ENCODE measurements at regions of chr3 and their contacts with region 1.

Region 1: GRCh38 chr3:136852180-136852579 is 9.8 kb upstream of the NCK1 start:
- DNase-seq: no peak
- H3K4me3 ChIP-seq: no peak overlapping the region
- H3K27ac ChIP-seq: no peak overlapping the region
- H3K4me1 ChIP-seq: no peaks in the 10 kb centered on the region
- H3K27me3 ChIP-seq: no peaks in the 10 kb centered on the region
- CTCF ChIP-seq: no peak

Region 2: DNA sequence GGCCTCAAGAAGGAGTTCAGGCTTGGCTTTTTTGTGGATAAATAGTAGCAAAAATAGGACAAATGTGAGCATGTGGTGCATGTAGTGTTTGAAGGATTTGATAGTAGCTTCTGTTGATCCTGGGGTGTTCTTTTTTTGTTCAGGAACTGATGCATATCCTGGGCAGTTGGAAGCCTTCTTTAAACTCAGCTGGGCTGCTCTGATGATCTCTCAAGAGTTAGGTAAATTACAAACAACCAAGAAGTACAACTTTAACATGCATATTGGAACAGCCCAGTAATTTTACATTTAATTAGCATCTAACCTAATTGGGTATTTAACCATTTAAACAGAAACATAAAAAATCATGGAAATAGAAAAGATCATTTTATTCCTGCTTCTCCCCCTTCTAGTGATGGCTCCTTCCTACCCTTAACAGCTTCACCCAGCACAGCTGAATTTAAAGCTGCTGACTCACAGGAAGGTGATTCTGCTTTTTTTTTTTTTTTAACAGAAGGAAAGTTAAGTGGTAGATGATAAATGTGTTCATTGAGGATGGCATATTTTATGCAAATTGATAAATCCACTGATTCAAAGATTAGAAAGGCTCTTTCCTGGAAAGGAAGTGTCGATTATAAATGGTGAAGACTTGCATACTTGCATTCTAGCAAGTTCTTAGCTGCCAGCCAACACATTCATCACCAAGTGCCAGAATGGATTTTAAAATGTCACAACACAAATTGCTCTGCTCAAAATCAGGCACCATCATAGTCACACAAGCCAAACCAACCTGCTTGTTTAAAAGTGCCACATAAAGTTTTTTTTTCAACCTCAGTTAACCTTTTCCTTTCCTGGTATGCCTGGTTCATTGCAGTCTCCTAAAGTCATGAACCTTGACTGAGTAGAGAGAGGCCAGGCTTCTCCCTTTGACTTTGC is 13.3 kb before region 1 on chr3:
- intact Hi-C with region 1: loop called (anchors 2 kb)
- DNase-seq: no peak
- H3K4me3 ChIP-seq: no peak overlapping the region
- H3K27ac ChIP-seq: no peak overlapping the region
- H3K4me1 ChIP-seq: peaks cover 0 to 9% (median 4%) of the 10 kb centered on the region in 4 donors
- H3K27me3 ChIP-seq: no peaks in the 10 kb centered on the region
- CTCF ChIP-seq: no peak